PC-3 (cell line): ENCODE measurements at regions of chr7 and their contacts with region 1.

Region 1: GRCh38 chr7:14288701-14289100 is 299.2 kb upstream of the ETV1 start:
- DNase-seq: no peak
- ATAC-seq: no peak
- H3K4me3 ChIP-seq: no peak overlapping the region
- H3K27ac ChIP-seq: no peak overlapping the region
- H3K4me1 ChIP-seq: no peaks in the 10 kb centered on the region
- H3K27me3 ChIP-seq: no peaks in the 10 kb centered on the region
- CTCF ChIP-seq: no peak

Region 2: GRCh38 chr7:13024121-13024674 is 1264.5 kb before region 1 on chr7:
- CTCF ChIA-PET with region 1: no interaction called
- POLR2A ChIA-PET with region 1: no interaction called
- intact Hi-C with region 1: no loop called
- DNase-seq: no peak
- ATAC-seq: no peak
- H3K4me3 ChIP-seq: no peak overlapping the region
- H3K27ac ChIP-seq: no peak overlapping the region
- H3K4me1 ChIP-seq: no peaks in the 10 kb centered on the region
- H3K27me3 ChIP-seq: no peaks in the 10 kb centered on the region
- CTCF ChIP-seq: no peak

Region 3: DNA sequence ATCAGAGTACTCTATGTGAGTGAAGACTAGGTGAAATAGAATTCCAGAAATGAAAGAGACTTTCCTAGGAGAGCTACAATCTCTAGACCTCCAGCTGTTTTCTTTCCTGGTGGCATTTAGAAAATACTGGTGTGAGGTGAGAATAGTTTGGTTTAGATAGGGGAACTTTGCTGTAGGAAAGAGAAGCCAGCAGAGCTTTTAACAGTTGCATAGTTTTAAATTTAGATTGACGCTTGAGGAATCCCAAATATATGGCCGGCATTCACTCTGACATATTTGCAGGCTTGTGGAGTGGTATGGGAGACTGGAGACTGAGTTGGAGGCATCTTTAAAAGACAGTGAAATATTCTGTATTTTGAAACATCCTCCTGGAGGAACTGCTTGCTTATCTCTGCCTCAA is 204.9 kb before region 1 on chr7:
- CTCF ChIA-PET with region 1: no interaction called
- POLR2A ChIA-PET with region 1: no interaction called
- intact Hi-C with region 1: no loop called
- DNase-seq: no peak
- ATAC-seq: no peak
- H3K4me3 ChIP-seq: no peak overlapping the region
- H3K27ac ChIP-seq: no peak overlapping the region
- H3K4me1 ChIP-seq: no peaks in the 10 kb centered on the region
- H3K27me3 ChIP-seq: no peaks in the 10 kb centered on the region
- CTCF ChIP-seq: no peak

Region 4: GRCh38 chr7:14095233-14095950 is 193.3 kb before region 1 on chr7:
- CTCF ChIA-PET with region 1: no interaction called
- POLR2A ChIA-PET with region 1: no interaction called
- intact Hi-C with region 1: loop called (anchors 5 kb)
- DNase-seq: peak; percentile 89
- ATAC-seq: peak; percentile 100
- H3K4me3 ChIP-seq: peak overlapping the region; percentile 35
- H3K27ac ChIP-seq: peak overlapping the region; percentile 81
- H3K4me1 ChIP-seq: peaks cover 13% of the 10 kb centered on the region
- H3K27me3 ChIP-seq: no peaks in the 10 kb centered on the region
- CTCF ChIP-seq: no peak

Region 5: DNA sequence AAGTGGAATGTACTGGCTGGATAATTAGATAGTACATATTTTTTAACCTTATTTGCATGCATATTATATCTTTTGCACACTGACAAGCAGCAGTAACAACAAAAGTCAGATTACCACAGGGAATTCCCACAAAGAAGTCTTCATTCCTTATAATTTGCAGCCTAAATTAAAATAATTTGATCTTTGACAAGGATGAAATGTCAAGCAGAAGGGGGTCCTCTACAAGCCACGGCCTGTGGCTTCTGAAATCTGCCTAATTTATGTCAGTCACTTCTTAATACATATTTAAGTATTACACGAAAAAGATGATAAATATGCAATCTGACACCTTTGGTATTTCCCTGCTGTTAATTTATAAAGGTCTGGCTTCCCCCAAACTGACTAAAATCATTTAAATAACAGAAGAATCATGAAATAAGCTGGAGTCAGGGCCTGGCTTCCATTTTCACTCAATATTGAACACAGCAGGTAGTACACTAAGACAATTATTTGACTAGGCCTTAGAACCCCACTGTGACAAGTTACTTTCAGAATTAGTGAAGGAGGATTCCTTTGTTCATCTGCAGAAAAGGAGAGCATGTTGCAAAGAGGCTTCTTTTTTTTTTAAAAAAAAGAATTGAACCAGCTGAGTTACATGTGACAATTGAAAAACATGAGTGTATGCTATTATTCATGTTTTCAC is 51.8 kb after region 1 on chr7:
- CTCF ChIA-PET with region 1: interaction called, 11 read pairs
- POLR2A ChIA-PET with region 1: no interaction called
- intact Hi-C with region 1: no loop called
- DNase-seq: no peak
- ATAC-seq: no peak
- H3K4me3 ChIP-seq: no peak overlapping the region
- H3K27ac ChIP-seq: no peak overlapping the region
- H3K4me1 ChIP-seq: no peaks in the 10 kb centered on the region
- H3K27me3 ChIP-seq: no peaks in the 10 kb centered on the region
- CTCF ChIP-seq: no peak

Region 6: GRCh38 chr7:14432924-14433323 is 144.2 kb after region 1 on chr7:
- CTCF ChIA-PET with region 1: no interaction called
- POLR2A ChIA-PET with region 1: no interaction called
- intact Hi-C with region 1: no loop called
- DNase-seq: no peak
- ATAC-seq: no peak
- H3K4me3 ChIP-seq: no peak overlapping the region
- H3K27ac ChIP-seq: no peak overlapping the region
- H3K4me1 ChIP-seq: no peaks in the 10 kb centered on the region
- H3K27me3 ChIP-seq: no peaks in the 10 kb centered on the region
- CTCF ChIP-seq: no peak